Activated B cell treated with CpG ODN at 0.5 μM for 24 hours (primary cell): ENCODE measurements at regions of chr13 and their contacts with region 1.

Region 1: DNA sequence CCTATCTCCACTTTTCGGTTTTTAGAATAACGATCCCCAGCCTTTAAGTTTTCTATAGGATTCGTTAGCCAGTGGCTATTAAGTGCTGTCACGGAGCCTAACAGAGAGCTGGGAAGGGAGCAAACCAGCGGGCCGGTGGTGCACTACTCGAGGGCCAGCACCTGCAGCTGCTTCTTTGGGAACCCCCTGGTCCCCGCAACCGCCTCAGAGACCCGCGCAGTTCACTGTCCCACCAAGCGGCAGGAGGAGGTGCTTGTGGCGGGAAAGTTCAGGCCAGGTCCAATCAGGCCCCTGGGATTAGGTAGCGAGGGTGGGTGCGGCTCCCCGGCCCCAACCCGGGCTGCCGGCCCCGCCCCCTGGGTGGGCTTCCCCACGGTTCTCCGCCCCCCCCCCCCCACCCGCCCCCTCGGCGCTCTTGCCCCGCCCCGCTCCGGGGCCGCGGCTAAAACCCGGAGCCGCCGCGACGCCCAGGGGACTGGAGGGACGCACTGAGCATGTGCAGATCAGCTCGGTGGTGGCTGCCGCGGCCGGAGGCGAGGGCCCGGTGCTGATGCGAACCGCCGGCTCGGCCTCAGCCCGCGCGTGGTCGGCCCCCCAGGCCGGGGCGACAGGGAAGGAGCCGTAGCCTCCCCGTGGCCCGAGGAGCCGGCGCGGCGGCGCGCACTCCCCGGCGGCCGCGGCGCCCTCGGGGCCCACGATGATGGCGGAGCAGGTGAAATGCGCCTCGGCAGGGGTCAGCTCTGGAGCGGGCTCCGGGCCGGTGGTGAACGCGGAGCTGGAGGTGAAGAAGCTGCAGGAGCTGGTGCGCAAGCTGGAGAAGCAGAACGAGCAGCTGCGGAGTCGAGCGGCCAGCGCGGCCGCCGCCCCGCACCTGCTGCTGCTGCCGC is at the start of gene SLAIN1:
- DNase-seq: peak; percentile 80
- ATAC-seq: peak; percentile 87
- H3K4me3 Mint-ChIP-seq: peak within 1 kb of the TSS; percentile 98
- H3K27ac Mint-ChIP-seq: peak within 1 kb of the TSS; percentile 85
- H3K4me1 Mint-ChIP-seq: peaks cover 29% of the 10 kb centered on the region
- H3K27me3 Mint-ChIP-seq: no peaks in the 10 kb centered on the region
- CTCF ChIP-seq: no peak
- total RNA-seq, gene SLAIN1: 15.3 and 16.2 TPM in 2 replicates

Region 2: GRCh38 chr13:76632401-76633044 is 1064.9 kb before region 1 on chr13:
- CTCF ChIA-PET with region 1: no interaction called
- POLR2A ChIA-PET with region 1: no interaction called
- intact Hi-C with region 1: no loop called
- DNase-seq: no peak
- ATAC-seq: no peak
- H3K4me3 Mint-ChIP-seq: no peak overlapping the region
- H3K27ac Mint-ChIP-seq: no peak overlapping the region
- H3K4me1 Mint-ChIP-seq: no peaks in the 10 kb centered on the region
- H3K27me3 Mint-ChIP-seq: peaks cover 2% of the 10 kb centered on the region
- CTCF ChIP-seq: no peak

Region 3: DNA sequence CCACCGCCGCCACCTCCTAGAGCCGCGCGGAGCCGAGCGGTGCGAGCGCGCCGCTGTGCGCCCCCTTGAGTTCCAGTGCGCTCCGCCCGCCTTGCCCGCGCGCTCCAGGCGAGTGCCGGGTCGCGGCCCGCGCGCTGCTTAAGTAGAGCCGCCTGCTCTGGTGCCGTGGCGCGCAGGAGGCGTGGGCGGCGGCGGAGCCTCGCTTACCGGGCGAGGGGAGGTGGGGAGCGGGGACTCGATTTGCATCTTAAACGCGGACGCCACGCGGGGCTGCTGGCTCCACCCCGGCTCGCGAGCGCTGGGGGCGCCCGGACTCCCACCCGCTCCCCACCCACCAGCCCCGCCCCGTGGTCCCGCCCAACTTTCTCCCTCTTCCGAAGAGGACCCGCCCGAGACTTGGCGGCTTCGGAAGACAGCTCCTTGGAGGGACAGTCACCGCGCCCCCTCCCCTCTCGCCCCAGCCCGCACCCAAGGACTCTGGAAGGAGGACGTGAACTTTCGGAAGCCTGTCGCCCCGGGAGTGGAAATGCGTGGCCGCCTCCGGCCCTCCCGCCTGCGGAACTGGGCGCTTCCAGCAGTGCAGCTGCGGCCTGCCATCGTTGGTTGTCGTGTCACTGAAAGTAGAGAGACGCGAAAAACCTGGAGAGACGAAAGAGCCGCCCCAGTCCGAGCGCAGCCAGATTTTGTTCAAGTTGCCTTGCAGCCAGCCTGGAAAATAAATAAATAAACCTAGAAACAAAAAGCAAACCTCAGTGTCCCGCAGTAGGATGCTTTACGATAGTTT is 811.0 kb before region 1 on chr13 and contains the start of gene KCTD12:
- CTCF ChIA-PET with region 1: no interaction called
- POLR2A ChIA-PET with region 1: interaction called, 4 read pairs
- intact Hi-C with region 1: loop called (anchors 1 kb)
- DNase-seq: peak; percentile 79
- ATAC-seq: peak; percentile 78
- H3K4me3 Mint-ChIP-seq: peak within 1 kb of the TSS; percentile 88
- H3K27ac Mint-ChIP-seq: peak within 1 kb of the TSS; percentile 72
- H3K4me1 Mint-ChIP-seq: peaks cover 24% of the 10 kb centered on the region
- H3K27me3 Mint-ChIP-seq: no peaks in the 10 kb centered on the region
- CTCF ChIP-seq: no peak
- total RNA-seq, gene KCTD12: 4.5 and 5.5 TPM in 2 replicates

Region 4: GRCh38 chr13:77184455-77184854 is 513.0 kb before region 1 on chr13:
- CTCF ChIA-PET with region 1: no interaction called
- POLR2A ChIA-PET with region 1: no interaction called
- intact Hi-C with region 1: loop called (anchors 5 kb)
- DNase-seq: peak; percentile 23
- ATAC-seq: peak; percentile 97
- H3K4me3 Mint-ChIP-seq: peak overlapping the region; percentile 61
- H3K27ac Mint-ChIP-seq: peak overlapping the region; percentile 95
- H3K4me1 Mint-ChIP-seq: peaks cover 28% of the 10 kb centered on the region
- H3K27me3 Mint-ChIP-seq: no peaks in the 10 kb centered on the region
- CTCF ChIP-seq: no peak

Region 5: DNA sequence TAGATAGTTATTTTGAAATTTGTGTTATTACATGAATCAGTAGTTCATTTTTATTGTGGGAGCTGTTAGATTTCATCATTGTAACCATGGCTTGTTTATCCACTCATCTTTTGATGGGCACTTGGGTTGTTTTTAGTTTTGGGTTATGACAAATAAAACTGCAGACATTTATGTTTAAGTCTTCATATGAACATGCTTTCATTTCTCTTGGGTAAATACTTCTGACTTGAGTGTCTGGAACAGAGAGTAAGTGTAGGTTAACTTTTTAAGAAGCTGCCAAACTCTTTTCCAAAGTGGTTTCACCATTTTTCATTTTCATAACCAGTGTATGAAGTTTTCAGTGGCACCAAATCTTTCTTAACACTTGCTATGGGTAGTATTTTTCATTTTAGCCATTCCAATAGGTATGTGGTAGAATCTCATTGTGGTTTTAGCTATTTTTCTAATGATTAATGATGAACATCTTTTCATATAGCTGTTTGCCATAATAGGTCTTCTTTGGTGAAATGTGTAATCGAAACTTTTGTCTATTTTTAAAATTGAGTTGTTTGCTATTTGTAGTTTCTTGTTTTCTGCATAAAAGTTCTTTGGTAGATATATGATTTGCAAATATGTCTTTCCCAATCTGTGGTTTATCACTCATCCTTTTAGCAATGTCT is 17.9 kb after region 1 on chr13:
- CTCF ChIA-PET with region 1: no interaction called
- POLR2A ChIA-PET with region 1: no interaction called
- intact Hi-C with region 1: loop called (anchors 2 kb)
- DNase-seq: no peak
- ATAC-seq: no peak
- H3K4me3 Mint-ChIP-seq: no peak overlapping the region
- H3K27ac Mint-ChIP-seq: no peak overlapping the region
- H3K4me1 Mint-ChIP-seq: peaks cover 22% of the 10 kb centered on the region
- H3K27me3 Mint-ChIP-seq: no peaks in the 10 kb centered on the region
- CTCF ChIP-seq: no peak

Region 6: DNA sequence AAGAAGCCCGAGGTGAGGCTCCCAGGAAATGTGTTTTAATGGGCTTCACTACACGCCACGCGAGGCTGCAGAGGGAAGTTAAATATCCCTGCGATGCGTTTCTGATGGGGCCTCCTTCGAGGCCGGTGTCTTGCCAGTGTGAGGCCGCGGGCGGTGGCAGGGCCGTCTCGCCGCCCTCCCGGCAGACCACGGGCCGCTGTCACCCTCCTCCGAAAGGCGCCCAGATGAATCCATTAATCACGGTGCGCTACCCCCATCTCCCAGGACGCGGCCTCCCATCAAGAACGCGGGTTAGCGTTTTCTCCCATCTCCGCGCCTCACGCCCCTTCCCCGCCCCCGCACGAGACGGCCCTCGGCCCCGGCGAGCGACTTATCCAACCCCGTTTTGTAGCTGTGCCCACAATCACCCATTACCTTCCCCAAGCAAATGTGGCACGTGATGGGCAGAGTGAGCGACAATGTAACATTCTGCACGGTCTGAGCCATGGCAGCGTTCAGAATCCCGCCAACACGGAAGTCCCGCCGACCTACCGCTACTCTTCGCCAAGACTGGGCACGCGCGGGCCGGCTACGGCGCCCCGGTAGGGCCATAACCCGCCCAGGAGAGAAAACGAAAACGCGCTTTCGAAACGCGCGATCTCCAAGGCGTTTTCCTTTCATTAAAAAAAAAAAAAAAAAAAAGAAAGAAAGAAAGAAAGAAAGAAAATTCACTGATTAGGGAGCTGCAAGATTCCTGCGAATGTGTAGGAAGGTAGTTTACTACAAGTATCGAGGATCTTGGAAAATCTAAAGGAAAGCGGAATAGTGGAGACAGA is 961.4 kb after region 1 on chr13 and contains the start of gene OBI1:
- CTCF ChIA-PET with region 1: no interaction called
- POLR2A ChIA-PET with region 1: no interaction called
- intact Hi-C with region 1: loop called (anchors 5 kb)
- DNase-seq: peak; percentile 88
- ATAC-seq: peak; percentile 98
- H3K4me3 Mint-ChIP-seq: peak within 1 kb of the TSS; percentile 100
- H3K27ac Mint-ChIP-seq: peak within 1 kb of the TSS; percentile 92
- H3K4me1 Mint-ChIP-seq: peaks cover 37% of the 10 kb centered on the region
- H3K27me3 Mint-ChIP-seq: no peaks in the 10 kb centered on the region
- CTCF ChIP-seq: no peak
- total RNA-seq, gene OBI1: 16.2 and 19.1 TPM in 2 replicates

Region 7: GRCh38 chr13:79480954-79481684 is 1783.7 kb after region 1 on chr13 and contains the start of gene NDFIP2:
- CTCF ChIA-PET with region 1: no interaction called
- POLR2A ChIA-PET with region 1: no interaction called
- intact Hi-C with region 1: loop called (anchors 5 kb)
- DNase-seq: peak; percentile 67
- ATAC-seq: peak; percentile 82
- H3K4me3 Mint-ChIP-seq: peak within 1 kb of the TSS; percentile 85
- H3K27ac Mint-ChIP-seq: peak within 1 kb of the TSS; percentile 37
- H3K4me1 Mint-ChIP-seq: peaks cover 16% of the 10 kb centered on the region
- H3K27me3 Mint-ChIP-seq: peaks cover 38% of the 10 kb centered on the region
- CTCF ChIP-seq: no peak
- total RNA-seq, gene NDFIP2: 2.8 and 3.8 TPM in 2 replicates